PC-9 (cell line): ENCODE measurements at regions of chr17 and their contacts with region 1.

Region 1: GRCh38 chr17:41959336-41960095 is 7.1 kb upstream of the CNP start:
- DNase-seq: peak; percentile 36 to 47
- H3K4me3 ChIP-seq: no peak overlapping the region
- H3K27ac ChIP-seq: no peak overlapping the region
- H3K4me1 ChIP-seq: no peaks in the 10 kb centered on the region
- H3K27me3 ChIP-seq: no peaks in the 10 kb centered on the region
- CTCF ChIP-seq: peak; percentile 67

Region 2: GRCh38 chr17:42472709-42473521 is 513.4 kb after region 1 on chr17:
- CTCF ChIA-PET with region 1: no interaction called
- POLR2A ChIA-PET with region 1: no interaction called
- intact Hi-C with region 1: no loop called
- DNase-seq: no peak
- H3K4me3 ChIP-seq: no peak overlapping the region
- H3K27ac ChIP-seq: no peak overlapping the region
- H3K4me1 ChIP-seq: no peaks in the 10 kb centered on the region
- H3K27me3 ChIP-seq: no peaks in the 10 kb centered on the region
- CTCF ChIP-seq: no peak

Region 3: DNA sequence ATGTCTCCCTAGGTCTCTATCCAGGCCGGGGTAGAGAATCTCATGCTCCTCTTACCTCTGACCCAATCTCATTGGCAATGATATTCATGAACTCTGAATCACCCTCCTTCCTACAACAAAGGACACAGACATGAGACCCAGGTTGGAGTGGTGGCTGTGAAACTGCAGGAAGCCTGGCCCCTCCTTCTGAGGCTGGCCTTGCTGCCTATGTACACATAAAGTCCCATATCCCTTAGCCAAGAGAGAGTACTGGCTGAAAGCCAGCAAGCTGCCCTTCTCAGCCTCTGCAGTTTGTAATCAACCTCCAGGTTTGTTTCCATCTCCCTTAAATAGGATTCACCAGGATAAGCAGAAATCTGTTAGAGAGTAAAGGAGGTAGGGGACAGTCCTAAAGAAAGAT is 994.2 kb after region 1 on chr17:
- CTCF ChIA-PET with region 1: interaction called, 11 read pairs
- POLR2A ChIA-PET with region 1: no interaction called
- intact Hi-C with region 1: no loop called
- DNase-seq: no peak
- H3K4me3 ChIP-seq: no peak overlapping the region
- H3K27ac ChIP-seq: no peak overlapping the region
- H3K4me1 ChIP-seq: no peaks in the 10 kb centered on the region
- H3K27me3 ChIP-seq: no peaks in the 10 kb centered on the region
- CTCF ChIP-seq: no peak